ENCODE measurements at regions of chr12 and their contacts with region 1.

Region 1: DNA sequence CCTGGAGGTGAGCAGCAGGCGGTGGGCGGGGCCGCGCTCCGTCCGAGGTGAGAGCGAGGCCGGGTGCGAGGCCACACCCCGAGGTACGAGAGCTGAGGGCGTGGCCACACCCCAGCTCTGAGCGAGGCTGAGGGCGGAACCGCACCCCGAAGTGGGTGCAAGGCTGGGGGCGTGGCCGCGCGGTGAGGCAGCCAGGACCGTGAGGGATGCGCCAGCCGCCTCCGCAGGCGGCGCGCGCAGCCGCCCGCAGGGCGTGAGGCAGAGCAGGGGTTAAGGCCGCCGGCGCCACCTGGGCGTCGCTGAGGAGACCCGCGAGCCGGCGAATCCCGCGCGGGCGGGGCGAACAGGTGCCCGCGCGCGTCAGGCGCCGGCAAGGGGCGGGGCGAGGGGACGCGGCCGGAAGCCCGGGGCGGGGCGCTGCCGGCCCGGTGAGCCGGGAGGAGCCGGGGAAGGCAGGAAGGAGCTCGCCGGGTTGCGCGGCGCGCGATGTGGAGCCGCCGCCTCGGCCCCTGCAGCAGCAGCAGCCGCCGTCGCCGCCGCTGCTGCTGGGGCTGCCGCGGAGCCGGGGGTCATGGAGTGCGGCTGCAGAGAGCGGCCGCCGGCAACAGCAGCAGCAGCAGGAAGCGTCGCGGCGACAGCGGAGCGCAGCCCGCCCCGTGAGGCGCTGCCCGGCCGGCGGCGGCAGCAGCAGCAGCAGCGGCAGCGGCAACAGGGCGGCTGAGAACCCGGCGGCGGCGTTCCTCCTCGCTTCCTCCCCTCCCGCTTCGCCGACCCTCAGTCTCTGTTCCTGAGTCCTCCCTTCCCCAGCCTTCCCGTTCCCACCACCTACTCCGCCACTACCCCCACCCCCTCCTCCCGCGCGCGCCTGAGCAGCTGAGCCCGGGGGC is at the start of gene BICDL1:
- DNase-seq: peak; percentile 96 to 98
- H3K4me3 ChIP-seq: peak within 1 kb of the TSS in 2 of 3 donors; percentile 33 to 50
- H3K27ac ChIP-seq: peak within 1 kb of the TSS in 2 of 3 donors; percentile 64 to 77
- H3K4me1 ChIP-seq: peaks cover 13 to 21% of the 10 kb centered on the region in 2 donors
- H3K27me3 ChIP-seq: no peaks in the 10 kb centered on the region
- CTCF ChIP-seq: no peak
- POLR2A ChIP-seq: peak in 1 of 2 donors; percentile 75
- total RNA-seq, gene BICDL1: 10.5 to 81.8 (median 48.1) TPM

Region 2: GRCh38 chr12:119749666-119750065 is 239.4 kb before region 1 on chr12:
- intact Hi-C with region 1: no loop called
- DNase-seq: no peak
- H3K4me3 ChIP-seq: no peak overlapping the region
- H3K27ac ChIP-seq: no peak overlapping the region
- H3K4me1 ChIP-seq: peaks cover 0 to 3% of the 10 kb centered on the region in 2 donors
- H3K27me3 ChIP-seq: no peaks in the 10 kb centered on the region
- CTCF ChIP-seq: no peak
- POLR2A ChIP-seq: no peak

Region 3: GRCh38 chr12:120064054-120064940 is 75.3 kb after region 1 on chr12:
- intact Hi-C with region 1: no loop called
- DNase-seq: no peak
- H3K4me3 ChIP-seq: no peak overlapping the region
- H3K27ac ChIP-seq: peak overlapping the region in 1 of 3 donors; percentile 36
- H3K4me1 ChIP-seq: peaks cover 30% of the 10 kb centered on the region in 2 donors
- H3K27me3 ChIP-seq: no peaks in the 10 kb centered on the region
- CTCF ChIP-seq: no peak
- POLR2A ChIP-seq: no peak

Region 4: GRCh38 chr12:120086801-120087621 is 98.0 kb after region 1 on chr12:
- intact Hi-C with region 1: loop called (anchors 5 kb)
- DNase-seq: peak; percentile 99
- H3K4me3 ChIP-seq: peak overlapping the region in 1 of 3 donors; percentile 21
- H3K27ac ChIP-seq: peak overlapping the region; percentile 78 to 89 (median 83)
- H3K4me1 ChIP-seq: peaks cover 14% of the 10 kb centered on the region in 2 donors
- H3K27me3 ChIP-seq: no peaks in the 10 kb centered on the region
- CTCF ChIP-seq: peak; percentile 79 to 99 (median 98)
- POLR2A ChIP-seq: peak in 1 of 2 donors; percentile 62

Measured in thyroid gland (tissue), 4 donors.